ENCODE measurements at regions of chr5 and their contacts with region 1.

Region 1: DNA sequence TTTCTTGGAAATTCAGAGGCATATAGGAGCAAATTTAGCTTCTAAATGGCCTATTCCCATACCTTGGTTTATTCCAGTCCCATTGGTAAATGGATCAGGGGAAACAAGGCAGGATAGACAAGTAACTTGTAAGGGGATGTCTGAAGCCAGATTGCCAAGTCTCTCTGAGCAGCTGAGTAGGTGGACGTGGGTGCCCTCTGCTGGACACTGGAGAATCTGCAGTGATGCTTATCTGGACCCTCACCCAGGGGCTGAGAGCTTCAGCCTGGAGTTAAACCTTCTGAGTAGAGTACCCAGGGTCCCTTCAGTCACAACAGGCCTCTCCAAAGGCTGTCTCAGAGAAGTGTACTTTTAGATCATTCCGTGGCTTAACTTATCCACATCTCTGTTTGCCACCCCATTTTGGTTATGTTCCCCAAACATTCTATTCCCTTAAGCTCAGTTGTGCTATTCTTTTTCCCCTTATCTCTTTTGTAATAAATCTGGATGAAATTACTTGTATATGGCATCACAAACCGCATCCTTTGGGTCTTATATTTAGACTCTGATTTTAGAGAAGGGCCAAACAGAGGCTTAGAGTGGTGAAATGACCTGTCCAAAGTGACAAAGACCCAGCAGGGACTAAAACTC is 218.3 kb upstream of the GLRA1 start:
- DNase-seq: peak; percentile 51
- CTCF ChIP-seq: peak; percentile 88

Region 2: GRCh38 chr5:152505442-152506042 is 362.6 kb after region 1 on chr5:
- in situ Hi-C with region 1: loop called (anchors 25 kb)
- DNase-seq: peak; percentile 30
- CTCF ChIP-seq: peak; percentile 70

Region 3: DNA sequence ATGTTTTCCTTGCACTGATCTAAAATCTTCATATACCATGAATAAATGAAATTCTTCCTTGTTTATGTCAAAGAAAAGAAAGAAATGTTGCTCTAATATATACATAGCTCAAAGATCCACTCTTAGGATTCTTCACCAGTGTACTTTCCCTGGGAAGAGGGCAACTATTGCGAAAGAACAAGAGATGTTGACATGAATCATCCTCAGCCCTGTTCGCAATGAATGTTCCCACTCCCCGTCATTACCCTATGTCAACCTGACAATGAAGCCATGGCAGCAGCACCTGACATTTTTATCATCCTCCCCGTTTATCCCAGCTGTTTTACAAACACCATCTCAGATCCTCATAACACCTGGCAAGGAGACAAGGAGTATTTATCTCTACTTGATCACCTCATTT is 938.4 kb after region 1 on chr5:
- in situ Hi-C with region 1: no loop called
- DNase-seq: no peak
- CTCF ChIP-seq: no peak